ENCODE measurements at regions of chr19 and their contacts with region 1.

Region 1: DNA sequence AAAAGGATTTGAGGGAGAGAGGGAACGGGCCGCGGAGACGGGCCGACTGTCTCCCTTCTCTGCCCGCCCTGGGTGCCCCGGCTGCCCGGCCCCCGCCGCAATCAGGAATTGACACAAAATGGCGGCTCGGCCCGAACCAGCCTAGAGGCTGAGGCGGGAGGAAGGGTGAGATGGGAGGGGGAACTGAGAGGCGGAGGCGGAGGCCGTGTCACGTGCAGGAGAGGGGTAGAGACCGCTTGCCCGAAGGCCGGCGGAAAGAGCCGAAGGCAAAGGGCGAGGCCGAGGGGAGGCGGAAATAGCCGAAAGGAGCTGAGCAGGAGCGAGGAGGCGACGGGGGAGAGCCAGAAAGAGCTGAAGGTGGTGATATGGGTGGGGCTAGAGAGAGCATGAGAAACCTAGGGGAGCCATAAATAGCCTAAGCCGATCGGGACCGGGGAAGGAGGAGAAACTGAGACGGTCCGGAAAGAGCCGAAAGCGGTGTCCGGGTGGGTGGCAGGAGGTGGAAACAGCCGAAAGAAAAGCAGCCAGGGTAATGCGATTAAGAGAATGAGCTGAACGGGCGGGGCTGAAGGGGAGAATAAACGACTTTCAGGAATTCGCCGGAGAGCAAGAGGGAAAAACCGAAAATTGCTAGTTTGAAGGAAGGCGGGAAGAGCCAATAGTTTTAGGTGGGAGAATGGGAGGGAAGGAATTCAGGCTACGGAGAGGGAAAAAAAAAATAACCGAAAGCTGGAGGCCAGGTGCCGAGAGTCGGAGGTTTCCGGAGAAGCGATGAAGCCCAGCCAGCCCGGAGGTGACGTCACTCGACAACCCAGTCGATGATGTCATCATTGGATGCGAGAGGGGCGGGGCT is at the start of gene ZC3H4:
- DNase-seq: peak; percentile 99 to 100 (median 99)
- ATAC-seq: peak; percentile 94 to 97 (median 95)
- H3K4me3 ChIP-seq: peak within 1 kb of the TSS; percentile 71 to 99 (median 94)
- H3K27ac ChIP-seq: peak within 1 kb of the TSS; percentile 97 to 100 (median 100)
- H3K4me1 ChIP-seq: peaks cover 0 to 36% (median 17%) of the 10 kb centered on the region in 12 donors
- H3K27me3 ChIP-seq: no peaks in the 10 kb centered on the region
- CTCF ChIP-seq: no peak
- POLR2A ChIP-seq: peak; percentile 54 to 73
- total RNA-seq, gene ZC3H4: 16.5 to 35.0 (median 24.7) TPM

Region 2: DNA sequence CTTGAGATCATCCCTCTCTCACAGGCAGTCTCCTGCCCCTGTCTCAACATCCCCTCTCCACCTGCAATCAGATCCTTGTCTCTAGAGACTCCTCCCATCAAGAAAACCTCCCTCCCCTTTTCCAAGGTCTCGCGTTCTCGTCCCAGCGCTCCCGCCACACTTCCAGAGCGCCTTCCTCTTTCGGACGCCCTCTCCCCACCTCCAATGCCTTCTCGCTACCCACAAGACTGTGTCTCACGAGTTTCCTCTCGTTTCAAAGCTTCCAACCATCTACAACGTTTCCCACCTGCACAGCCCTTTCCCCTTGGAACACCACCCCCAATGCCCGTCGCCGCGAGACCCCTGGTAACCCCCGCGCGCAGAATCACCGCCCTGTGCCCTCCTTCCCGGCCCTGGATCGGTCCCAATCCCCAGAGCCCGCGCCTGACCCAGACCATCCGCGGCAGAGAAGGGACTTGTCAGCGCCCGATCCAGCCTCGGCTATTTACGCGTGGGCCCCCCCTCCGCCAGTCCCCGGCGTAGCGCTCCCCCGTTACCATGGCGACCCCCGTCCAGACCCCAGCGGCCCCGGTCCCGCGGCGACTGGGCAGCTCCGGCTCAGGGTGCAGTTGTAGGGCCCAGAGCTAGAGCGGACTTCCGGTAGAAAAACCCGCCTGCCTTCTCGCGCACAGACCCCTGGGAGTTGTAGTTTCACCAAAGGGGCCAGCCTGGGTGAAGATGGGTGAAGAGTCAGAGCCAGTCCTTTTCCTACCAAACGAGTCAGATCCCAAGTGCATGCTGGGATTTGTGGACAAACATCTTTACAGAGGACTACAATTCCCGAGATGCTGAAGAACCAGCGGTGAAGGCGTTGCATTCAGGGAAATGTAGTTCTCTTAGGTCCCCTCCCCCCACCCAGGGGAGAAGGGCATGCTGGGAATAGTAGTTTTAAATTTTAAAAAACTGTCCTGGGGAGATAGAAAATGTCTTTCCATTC is 262.7 kb before region 1 on chr19 and contains the start of gene AP2S1:
- intact Hi-C with region 1: loop called in 5 of 10 experiments (anchors 5 to 10 kb)
- DNase-seq: peak; percentile 93 to 97 (median 97)
- ATAC-seq: peak; percentile 92 to 97 (median 96)
- H3K4me3 ChIP-seq: peak within 1 kb of the TSS; percentile 66 to 97 (median 79)
- H3K27ac ChIP-seq: peak within 1 kb of the TSS; percentile 40 to 92 (median 86)
- H3K4me1 ChIP-seq: peaks cover 0 to 32% (median 12%) of the 10 kb centered on the region in 12 donors
- H3K27me3 ChIP-seq: no peaks in the 10 kb centered on the region
- CTCF ChIP-seq: peak in 1 of 12 donors; percentile 17
- POLR2A ChIP-seq: peak in 1 of 2 donors; percentile 78
- total RNA-seq, gene AP2S1: 75.3 to 148 (median 84.5) TPM

Region 3: DNA sequence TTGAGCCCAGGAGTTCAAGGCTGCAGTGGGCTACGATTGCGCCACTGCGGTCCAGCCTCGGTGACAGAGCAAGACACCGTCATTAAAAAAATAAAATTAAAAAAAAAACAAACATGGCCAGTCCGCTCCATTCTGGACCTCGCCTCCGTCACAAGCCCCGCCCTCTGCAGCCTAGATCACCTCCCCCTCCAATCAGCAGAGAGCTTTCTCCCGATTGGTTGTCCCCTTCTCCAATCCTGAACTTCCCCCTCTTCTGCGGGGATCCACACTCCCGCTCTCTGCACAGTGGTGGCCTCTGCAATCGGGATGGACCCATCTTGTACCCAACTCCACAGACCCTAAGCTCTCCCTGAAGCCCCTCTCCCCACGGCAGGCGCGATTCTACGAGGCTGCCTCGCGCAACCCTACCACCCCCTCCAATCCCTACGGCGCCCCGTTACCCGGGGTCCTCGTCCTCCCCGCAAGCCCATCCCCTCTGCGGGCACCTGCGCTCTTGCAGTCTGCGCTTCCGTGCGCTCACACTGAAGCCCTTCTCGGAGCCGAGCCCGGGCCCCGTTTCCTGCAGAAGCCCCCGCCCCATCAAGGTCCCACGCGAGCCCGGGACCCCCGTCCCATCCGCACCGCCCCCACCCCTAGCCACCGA is 65.3 kb before region 1 on chr19:
- intact Hi-C with region 1: loop called in 1 of 10 experiments (anchors 2 kb)
- DNase-seq: peak; percentile 85 to 89 (median 87)
- ATAC-seq: peak; percentile 67 to 90 (median 84)
- H3K4me3 ChIP-seq: peak overlapping the region; percentile 77 to 99 (median 92)
- H3K27ac ChIP-seq: peak overlapping the region in 11 of 12 donors; percentile 68 to 94 (median 82)
- H3K4me1 ChIP-seq: peaks cover 0 to 14% (median 2%) of the 10 kb centered on the region in 12 donors
- H3K27me3 ChIP-seq: no peaks in the 10 kb centered on the region
- CTCF ChIP-seq: no peak
- POLR2A ChIP-seq: no peak

Region 4: GRCh38 chr19:47095476-47096099 is 17.6 kb before region 1 on chr19:
- intact Hi-C with region 1: loop called in 1 of 10 experiments (anchors 2 kb)
- DNase-seq: peak in 1 of 5 donors; percentile 24
- ATAC-seq: no peak
- H3K4me3 ChIP-seq: no peak overlapping the region
- H3K27ac ChIP-seq: peak overlapping the region in 10 of 12 donors; percentile 17 to 79 (median 64)
- H3K4me1 ChIP-seq: peaks cover 0 to 59% (median 44%) of the 10 kb centered on the region in 12 donors
- H3K27me3 ChIP-seq: no peaks in the 10 kb centered on the region
- CTCF ChIP-seq: no peak
- POLR2A ChIP-seq: no peak

Region 5: DNA sequence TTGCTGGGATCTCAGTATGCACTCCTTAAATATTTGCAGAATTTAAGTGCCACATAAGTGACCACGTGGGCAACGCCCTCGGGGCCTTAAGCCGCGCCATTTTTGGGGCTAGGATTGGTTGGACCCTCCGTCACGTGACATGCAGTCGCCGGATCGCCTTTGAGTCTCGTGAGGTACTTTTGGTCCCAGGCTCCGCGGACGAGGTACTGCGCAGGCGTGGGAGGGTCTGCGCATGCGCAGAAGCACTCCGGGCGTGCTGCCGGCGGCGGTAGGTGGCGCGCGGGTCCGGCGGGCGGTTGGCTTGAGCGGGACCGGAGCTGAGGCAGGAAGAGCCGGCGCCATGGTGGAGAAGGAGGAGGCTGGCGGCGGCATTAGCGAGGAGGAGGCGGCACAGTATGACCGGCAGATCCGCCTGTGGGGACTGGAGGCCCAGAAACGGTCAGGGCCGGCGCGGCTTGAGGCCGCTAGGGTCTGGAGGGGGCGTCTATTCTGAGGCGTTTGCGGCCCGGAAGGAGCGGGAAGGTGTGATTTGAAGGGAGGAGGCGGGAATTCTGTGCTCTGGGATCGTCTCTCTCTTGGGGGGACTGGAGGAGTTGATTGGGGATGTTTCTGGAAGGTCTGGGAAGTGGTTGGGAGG is 17.5 kb after region 1 on chr19 and contains the start of gene SAE1:
- intact Hi-C with region 1: loop called in 1 of 10 experiments (anchors 2 kb)
- DNase-seq: peak; percentile 94 to 98 (median 97)
- ATAC-seq: peak; percentile 83 to 95 (median 94)
- H3K4me3 ChIP-seq: peak within 1 kb of the TSS; percentile 51 to 86 (median 74)
- H3K27ac ChIP-seq: peak within 1 kb of the TSS; percentile 79 to 93 (median 90)
- H3K4me1 ChIP-seq: peaks cover 0 to 44% (median 22%) of the 10 kb centered on the region in 12 donors
- H3K27me3 ChIP-seq: no peaks in the 10 kb centered on the region
- CTCF ChIP-seq: peak; percentile 21 to 83 (median 52)
- POLR2A ChIP-seq: peak in 1 of 2 donors; percentile 77
- total RNA-seq, gene SAE1: 30.5 to 58.7 (median 49.7) TPM

Measured in heart left ventricle (tissue), 16 donors.